Tibial artery (tissue), 4 donors: ENCODE measurements at regions of chr12 and their contacts with region 1.

Region 1: GRCh38 chr12:15276088-15276698 is 46.1 kb upstream of the PTPRO start:
- DNase-seq: no peak
- H3K4me3 ChIP-seq: no peak overlapping the region
- H3K27ac ChIP-seq: peak overlapping the region; percentile 3 to 67
- H3K4me1 ChIP-seq: peaks cover 9 to 44% (median 17%) of the 10 kb centered on the region in 4 donors
- H3K27me3 ChIP-seq: no peaks in the 10 kb centered on the region
- CTCF ChIP-seq: peak; percentile 67 to 81

Region 2: DNA sequence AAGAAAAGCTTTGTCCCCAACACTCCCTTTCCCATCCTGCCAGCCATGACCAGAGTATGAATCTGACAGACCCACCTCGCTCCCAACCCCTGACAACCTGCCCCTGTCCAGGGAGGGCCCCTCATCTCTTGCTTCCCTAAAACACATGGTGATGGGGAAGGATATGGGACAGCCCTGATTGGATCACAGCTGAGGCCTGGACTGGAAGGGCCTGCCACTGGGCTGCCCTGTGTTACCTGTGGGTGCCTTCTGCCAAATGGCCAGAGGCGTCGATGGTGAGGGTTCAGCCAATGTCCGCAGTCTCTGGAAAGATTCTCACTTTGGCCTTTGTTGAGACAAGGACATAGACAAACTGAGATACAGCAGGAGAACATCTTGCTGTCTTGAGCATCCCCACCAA is 41.7 kb before region 1 on chr12:
- intact Hi-C with region 1: no loop called
- DNase-seq: no peak
- H3K4me3 ChIP-seq: no peak overlapping the region
- H3K27ac ChIP-seq: no peak overlapping the region
- H3K4me1 ChIP-seq: peaks cover 0 to 7% (median 0%) of the 10 kb centered on the region in 4 donors
- H3K27me3 ChIP-seq: no peaks in the 10 kb centered on the region
- CTCF ChIP-seq: no peak

Region 3: DNA sequence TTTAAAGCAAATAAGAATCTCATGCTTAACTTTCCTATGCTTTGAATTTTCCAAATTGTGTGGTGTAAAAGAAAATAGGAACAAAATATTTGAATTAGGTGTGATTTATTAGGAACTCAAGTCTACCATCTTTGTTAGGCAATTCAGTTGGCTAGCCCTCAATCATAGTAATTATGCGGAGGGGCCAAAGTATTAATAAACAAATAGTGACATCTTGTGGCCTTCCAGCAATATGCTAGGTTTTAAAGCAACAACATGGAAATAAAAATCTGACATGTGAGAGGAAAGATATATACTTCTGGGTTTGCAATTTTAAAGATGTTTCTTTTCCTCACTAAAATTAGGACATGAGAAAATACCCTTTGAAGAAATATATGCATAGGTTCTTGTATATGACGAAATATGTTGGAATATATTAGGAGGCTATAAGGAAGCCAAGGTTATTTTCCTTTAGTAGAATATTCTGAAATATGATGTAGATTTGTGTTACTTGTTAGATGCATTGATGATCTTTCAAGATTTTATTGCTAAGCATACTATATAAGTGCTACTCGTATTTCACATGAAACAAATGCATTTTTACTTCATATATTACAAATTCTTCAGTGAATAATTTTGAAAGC is 246.5 kb after region 1 on chr12:
- intact Hi-C with region 1: loop called (anchors 5 kb)
- DNase-seq: no peak
- H3K4me3 ChIP-seq: no peak overlapping the region
- H3K27ac ChIP-seq: no peak overlapping the region
- H3K4me1 ChIP-seq: no peaks in the 10 kb centered on the region
- H3K27me3 ChIP-seq: no peaks in the 10 kb centered on the region
- CTCF ChIP-seq: peak; percentile 50 to 71

Region 4: DNA sequence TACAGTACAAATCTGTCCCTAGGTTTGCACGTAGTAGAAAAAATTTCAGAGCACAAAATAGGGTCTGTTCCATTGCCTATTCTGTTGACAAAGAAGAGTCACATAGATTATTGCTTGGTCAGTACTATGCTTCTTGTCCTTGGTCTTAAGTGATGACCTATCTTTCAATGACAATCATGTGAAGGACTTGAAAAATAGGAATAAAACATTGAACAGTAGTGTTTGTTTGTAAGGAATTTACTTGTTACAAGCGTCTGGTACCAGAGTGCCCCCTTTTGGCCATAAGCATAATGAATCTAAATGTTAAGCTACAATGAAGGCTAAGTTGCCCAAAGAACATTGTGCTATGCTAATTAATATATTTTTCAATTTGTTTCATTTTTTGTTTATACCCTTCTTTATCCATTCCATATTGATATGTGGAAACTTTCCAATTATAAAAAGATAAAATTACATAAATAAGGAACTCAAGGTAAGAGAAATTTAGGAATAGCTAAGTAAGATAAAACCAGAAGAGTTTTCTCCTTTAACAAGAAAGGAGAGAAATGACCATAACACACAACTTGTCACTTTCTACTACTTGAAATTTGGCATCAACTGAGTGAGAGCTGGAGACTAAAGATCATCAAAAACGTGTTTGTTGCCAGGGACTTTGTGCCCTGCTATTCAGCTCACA is 308.3 kb after region 1 on chr12:
- intact Hi-C with region 1: loop called (anchors 2 kb)
- DNase-seq: no peak
- H3K4me3 ChIP-seq: no peak overlapping the region
- H3K27ac ChIP-seq: no peak overlapping the region
- H3K4me1 ChIP-seq: peaks cover 0 to 4% (median 0%) of the 10 kb centered on the region in 4 donors
- H3K27me3 ChIP-seq: no peaks in the 10 kb centered on the region
- CTCF ChIP-seq: peak; percentile 77 to 78

Region 5: GRCh38 chr12:15856097-15856982 is 580.1 kb after region 1 on chr12:
- intact Hi-C with region 1: loop called (anchors 5 kb)
- DNase-seq: peak in 1 of 2 donors; percentile 36
- H3K4me3 ChIP-seq: no peak overlapping the region
- H3K27ac ChIP-seq: peak overlapping the region; percentile 16 to 44
- H3K4me1 ChIP-seq: peaks cover 0 to 24% (median 3%) of the 10 kb centered on the region in 4 donors
- H3K27me3 ChIP-seq: no peaks in the 10 kb centered on the region
- CTCF ChIP-seq: peak; percentile 78 to 90